ENCODE measurements at regions of chr16 and their contacts with region 1.

Region 1: DNA sequence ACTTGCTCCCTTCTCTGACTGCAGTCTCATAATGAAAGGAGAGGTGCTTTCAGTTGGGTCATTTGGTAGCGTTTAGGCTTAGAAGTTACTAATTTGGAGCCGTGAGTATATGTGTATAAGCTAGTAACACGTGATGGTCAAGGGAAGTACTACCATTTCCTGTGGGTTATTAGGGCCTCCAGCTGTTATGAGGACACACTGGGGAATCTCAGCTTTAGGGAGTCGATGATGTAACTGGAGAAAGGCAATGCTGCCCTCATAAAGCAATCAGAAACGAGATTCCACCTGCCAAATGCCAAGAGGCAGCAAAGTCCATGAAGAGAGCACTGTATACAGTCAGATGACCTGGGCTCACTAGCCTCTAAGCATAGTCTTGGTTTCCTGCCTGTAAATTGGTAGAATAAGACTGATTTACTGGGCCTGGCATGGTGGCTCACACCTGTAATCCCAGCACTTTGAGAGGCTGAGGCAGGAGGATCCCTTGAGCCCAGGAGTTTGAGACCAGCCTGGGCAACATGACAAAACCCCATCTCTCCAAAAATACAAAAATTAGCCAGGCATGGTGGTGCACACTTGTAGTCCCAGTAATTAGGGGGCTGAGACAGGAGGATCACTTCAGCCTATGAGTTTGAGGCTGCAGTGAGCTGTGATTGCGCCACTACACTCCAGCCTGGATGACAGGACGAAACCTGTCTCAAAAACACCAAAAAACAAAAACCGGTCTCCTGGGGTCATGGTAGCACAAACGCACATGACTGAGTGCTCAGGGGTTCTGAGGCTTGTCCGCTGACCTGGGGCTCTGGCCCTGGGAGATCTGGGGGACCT is 53.0 kb downstream of the SF3B3 start:
- DNase-seq: no peak
- ATAC-seq: peak; percentile 64
- H3K4me3 ChIP-seq: no peak overlapping the region
- H3K27ac ChIP-seq: peak overlapping the region; percentile 54
- H3K4me1 ChIP-seq: peaks cover 21% of the 10 kb centered on the region
- H3K27me3 ChIP-seq: no peaks in the 10 kb centered on the region
- CTCF ChIP-seq: no peak

Region 2: GRCh38 chr16:70331588-70332358 is 244.9 kb before region 1 on chr16:
- CTCF ChIA-PET with region 1: no interaction called
- POLR2A ChIA-PET with region 1: interaction called, 20 read pairs
- in situ Hi-C with region 1: no loop called
- intact Hi-C with region 1: no loop called
- DNase-seq: no peak
- ATAC-seq: peak; percentile 81
- H3K4me3 ChIP-seq: no peak overlapping the region
- H3K27ac ChIP-seq: no peak overlapping the region
- H3K4me1 ChIP-seq: no peaks in the 10 kb centered on the region
- H3K27me3 ChIP-seq: no peaks in the 10 kb centered on the region
- CTCF ChIP-seq: peak; percentile 80

Region 3: GRCh38 chr16:70418274-70418992 is 158.2 kb before region 1 on chr16:
- CTCF ChIA-PET with region 1: no interaction called
- POLR2A ChIA-PET with region 1: no interaction called
- in situ Hi-C with region 1: no loop called
- intact Hi-C with region 1: no loop called
- DNase-seq: no peak
- ATAC-seq: no peak
- H3K4me3 ChIP-seq: no peak overlapping the region
- H3K27ac ChIP-seq: peak overlapping the region; percentile 65
- H3K4me1 ChIP-seq: peaks cover 68% of the 10 kb centered on the region
- H3K27me3 ChIP-seq: no peaks in the 10 kb centered on the region
- CTCF ChIP-seq: no peak

Region 4: DNA sequence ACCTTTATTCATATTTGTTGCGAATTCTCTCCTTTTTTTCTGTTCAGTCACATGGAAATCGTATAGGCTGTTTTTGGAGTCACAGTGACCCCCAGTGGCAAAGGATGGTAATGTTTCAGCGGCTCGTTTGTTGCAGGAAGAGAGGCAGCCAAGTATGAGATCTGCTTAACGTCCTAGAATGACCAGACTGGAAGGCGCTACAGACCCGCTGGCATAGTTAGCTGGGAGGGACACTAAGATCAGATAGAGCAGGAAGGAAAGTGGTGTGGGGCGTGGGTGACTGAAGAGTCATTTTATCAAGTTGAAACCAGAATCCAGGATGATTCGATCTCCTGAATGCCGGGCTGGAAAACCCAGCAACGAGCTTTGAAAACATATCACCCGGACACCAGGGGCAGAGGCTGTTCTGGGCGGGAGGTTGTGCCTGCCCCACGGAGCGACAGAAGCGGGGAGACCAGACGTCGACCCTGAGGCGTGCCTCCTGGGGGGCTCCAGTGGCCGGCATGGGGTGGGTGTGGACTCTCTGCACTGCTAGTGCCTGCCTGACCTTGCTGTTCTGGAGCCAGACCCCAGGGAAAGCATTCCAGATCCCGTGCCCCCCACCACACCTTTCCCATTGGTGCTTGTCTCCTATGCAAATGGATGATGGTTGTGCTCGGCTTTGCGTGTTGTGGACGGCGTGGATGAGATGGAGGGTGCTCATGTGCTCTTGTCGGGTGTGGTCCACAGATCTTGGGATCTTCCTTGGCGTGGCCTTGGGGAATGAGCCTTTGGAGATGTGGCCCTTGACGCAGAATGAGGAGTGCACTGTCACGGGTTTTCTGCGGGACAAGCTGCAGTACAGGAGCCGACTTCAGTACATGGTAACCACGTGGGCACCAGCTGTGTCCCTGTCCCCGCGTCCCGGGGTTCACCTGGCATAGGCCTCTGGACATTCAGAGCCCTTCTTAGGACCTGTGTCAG is 77.4 kb after region 1 on chr16:
- CTCF ChIA-PET with region 1: no interaction called
- POLR2A ChIA-PET with region 1: no interaction called
- in situ Hi-C with region 1: no loop called
- intact Hi-C with region 1: loop called (anchors 10 kb)
- DNase-seq: peak; percentile 54
- ATAC-seq: peak; percentile 85
- H3K4me3 ChIP-seq: peak overlapping the region in 1 of 2 experiments; percentile 40; a peak in 2 of 4 replicates
- H3K27ac ChIP-seq: peak overlapping the region; percentile 8; the same call in 1 of the 2 replicates
- H3K4me1 ChIP-seq: no peaks in the 10 kb centered on the region
- H3K27me3 ChIP-seq: no peaks in the 10 kb centered on the region
- CTCF ChIP-seq: peak; percentile 83